ENCODE measurements at regions of chr18 and their contacts with region 1.

Region 1: DNA sequence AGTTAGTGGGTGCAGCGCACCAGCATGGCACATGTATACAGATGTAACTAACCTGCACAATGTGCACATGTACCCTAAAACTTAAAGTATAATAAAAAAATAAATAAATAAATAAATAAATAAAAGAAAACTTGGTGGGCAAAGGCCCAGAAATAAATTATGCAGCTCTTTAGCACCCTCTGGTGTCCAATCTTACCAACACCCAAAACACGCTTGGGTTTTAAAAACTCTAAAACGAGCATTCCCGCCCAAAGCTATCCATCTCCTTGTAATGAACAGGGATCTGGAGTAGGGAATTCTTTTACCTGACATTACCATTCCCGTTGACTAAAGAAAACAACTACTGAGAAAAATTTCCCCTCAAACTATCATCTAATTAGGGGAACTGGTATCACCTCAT is 2005.9 kb upstream of the CELF4 start:
- DNase-seq: peak; percentile 10
- ATAC-seq: no peak
- H3K4me3 ChIP-seq: no peak overlapping the region
- H3K27ac ChIP-seq: no peak overlapping the region
- H3K4me1 ChIP-seq: no peaks in the 10 kb centered on the region
- H3K27me3 ChIP-seq: no peaks in the 10 kb centered on the region
- CTCF ChIP-seq: peak; percentile 40
- EP300 ChIP-seq: no peak
- POLR2A ChIP-seq: no peak
- RAD21 ChIP-seq: no peak; the same call in 1 of the 2 replicates

Region 2: DNA sequence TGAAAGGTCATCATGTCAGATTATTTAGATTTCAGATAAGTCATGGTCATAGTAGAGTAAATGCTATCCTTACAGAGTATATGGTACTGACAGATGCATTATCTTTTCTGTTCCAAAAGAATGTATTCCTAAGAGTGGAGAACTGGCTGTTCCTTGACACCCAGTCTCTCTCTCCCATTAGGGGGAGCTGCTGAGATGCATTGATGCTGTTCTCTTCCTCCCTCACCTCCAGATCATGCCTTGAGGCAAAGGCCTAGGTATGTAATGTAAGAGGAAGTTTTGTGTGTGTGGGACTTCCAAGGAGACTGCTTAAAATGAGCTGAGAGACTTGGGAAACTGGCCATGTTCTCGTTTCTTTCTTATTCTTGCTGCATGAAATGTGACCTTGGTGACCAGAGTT is 1026.4 kb before region 1 on chr18:
- CTCF ChIA-PET with region 1: no interaction called
- POLR2A ChIA-PET with region 1: no interaction called
- in situ Hi-C with region 1: no loop called
- intact Hi-C with region 1: loop called (anchors 5 kb)
- DNase-seq: peak; percentile 24
- ATAC-seq: peak; percentile 71
- H3K4me3 ChIP-seq: no peak overlapping the region
- H3K27ac ChIP-seq: no peak overlapping the region
- H3K4me1 ChIP-seq: no peaks in the 10 kb centered on the region
- H3K27me3 ChIP-seq: no peaks in the 10 kb centered on the region
- CTCF ChIP-seq: peak; percentile 51
- EP300 ChIP-seq: no peak
- POLR2A ChIP-seq: no peak
- RAD21 ChIP-seq: no peak

Region 3: DNA sequence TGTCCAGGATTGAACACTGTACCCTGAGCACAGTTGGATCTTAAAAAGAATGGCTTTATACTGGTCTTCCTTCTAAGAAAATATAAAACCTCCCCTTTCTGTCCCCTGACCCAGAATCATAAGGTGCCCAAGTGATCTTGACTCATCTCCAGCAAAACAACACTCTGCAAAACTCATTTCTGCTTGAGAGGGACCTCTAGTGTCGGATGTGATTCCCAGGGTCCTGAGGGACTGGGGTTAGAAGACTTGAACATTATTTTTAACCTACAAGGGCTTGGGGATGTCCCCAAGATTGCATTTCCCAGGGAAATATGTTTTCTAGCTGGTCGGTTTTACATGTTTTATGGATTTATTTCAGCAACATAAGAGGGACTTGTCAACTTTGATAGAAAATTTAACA is 687.5 kb before region 1 on chr18:
- CTCF ChIA-PET with region 1: no interaction called
- POLR2A ChIA-PET with region 1: no interaction called
- in situ Hi-C with region 1: no loop called
- intact Hi-C with region 1: loop called (anchors 10 kb)
- DNase-seq: no peak
- ATAC-seq: no peak
- H3K4me3 ChIP-seq: no peak overlapping the region
- H3K27ac ChIP-seq: no peak overlapping the region
- H3K4me1 ChIP-seq: no peaks in the 10 kb centered on the region
- H3K27me3 ChIP-seq: no peaks in the 10 kb centered on the region
- CTCF ChIP-seq: no peak
- EP300 ChIP-seq: no peak
- POLR2A ChIP-seq: no peak
- RAD21 ChIP-seq: no peak

Region 4: DNA sequence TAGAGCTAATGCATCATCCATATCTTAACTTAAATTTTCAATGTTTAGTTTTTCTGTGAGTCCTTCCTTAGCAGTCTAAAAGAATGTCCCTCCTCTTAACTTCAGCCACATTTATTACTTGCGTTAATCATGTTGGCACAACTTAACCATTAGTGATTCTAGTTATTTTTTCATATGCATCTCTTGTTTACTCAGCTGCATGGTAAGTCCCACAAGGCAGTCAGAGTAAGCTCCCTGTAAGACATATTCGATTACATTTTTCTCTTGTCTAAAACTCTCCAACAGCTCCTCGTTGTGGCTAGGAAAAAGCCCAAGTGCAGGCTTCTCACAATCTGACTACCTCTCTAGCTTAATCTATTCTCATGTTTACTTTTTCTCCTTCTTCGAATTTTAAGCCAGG is 338.2 kb after region 1 on chr18:
- CTCF ChIA-PET with region 1: no interaction called
- POLR2A ChIA-PET with region 1: no interaction called
- in situ Hi-C with region 1: no loop called
- intact Hi-C with region 1: no loop called
- DNase-seq: no peak
- ATAC-seq: no peak
- H3K4me3 ChIP-seq: no peak overlapping the region
- H3K27ac ChIP-seq: no peak overlapping the region
- H3K4me1 ChIP-seq: no peaks in the 10 kb centered on the region
- H3K27me3 ChIP-seq: no peaks in the 10 kb centered on the region
- CTCF ChIP-seq: no peak
- EP300 ChIP-seq: no peak
- POLR2A ChIP-seq: no peak
- RAD21 ChIP-seq: no peak